Activated CD4-positive, alpha-beta T cell treated with anti-CD3 and anti-CD28 coated beads for 36 hours (primary cell): ENCODE measurements at regions of chr22 and their contacts with region 1.

Region 1: GRCh38 chr22:49852898-49853894 is at the start of gene ZBED4:
- DNase-seq: peak; percentile 99
- ATAC-seq: peak; percentile 88
- H3K4me3 Mint-ChIP-seq: peak within 1 kb of the TSS; percentile 96
- H3K27ac Mint-ChIP-seq: peak within 1 kb of the TSS; percentile 87
- H3K4me1 Mint-ChIP-seq: peaks cover 36% of the 10 kb centered on the region
- H3K27me3 Mint-ChIP-seq: peaks cover 8% of the 10 kb centered on the region
- total RNA-seq, gene ZBED4: 17.3 to 17.4 TPM

Region 2: DNA sequence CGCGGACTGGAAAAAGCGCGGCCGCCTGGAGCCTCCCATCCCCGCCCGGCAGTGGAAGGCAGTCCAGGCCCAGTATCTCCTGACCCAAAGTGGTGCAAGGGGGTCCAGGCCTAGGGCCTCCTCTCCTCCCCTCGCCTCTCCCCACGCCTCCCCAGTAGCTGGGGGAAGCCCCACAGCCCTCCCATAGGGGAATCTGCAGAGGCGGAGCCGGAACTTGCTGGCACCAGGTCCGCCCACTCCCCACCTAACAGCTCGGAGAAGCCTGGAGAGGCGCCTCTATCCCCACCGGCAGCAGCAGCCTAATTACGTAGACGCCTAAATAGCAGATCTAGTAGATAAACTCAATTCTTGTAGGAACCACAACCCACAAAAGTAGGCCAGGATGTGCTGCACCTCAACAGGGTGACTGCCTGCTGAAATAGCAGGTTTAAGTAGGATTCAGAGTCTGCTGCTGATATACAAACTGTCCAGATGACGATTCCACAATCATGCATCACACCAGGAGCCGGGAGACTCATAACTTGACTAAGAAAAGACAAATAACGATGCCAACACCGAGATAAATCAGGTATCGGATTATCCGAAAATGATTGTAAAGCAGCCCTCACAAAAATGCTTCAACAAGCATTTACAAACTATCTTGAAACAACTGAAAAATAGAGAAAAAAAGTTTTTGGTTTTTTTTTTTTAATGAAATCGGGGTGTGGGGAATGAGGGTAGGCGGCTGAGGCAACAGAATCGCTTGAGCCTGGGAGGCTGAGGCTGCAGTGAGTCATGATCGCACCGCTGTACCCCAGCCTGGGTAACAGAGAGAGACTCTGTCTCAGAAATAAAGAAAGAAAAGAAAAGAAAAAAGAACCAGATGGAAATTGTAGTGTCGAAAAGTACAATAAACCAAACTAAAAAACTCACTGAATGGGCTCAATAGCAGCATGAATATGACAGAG is 14.2 kb before region 1 on chr22:
- CTCF ChIA-PET with region 1: interaction called, 4 read pairs
- POLR2A ChIA-PET with region 1: interaction called, 3 read pairs
- intact Hi-C with region 1: loop called (anchors 1 kb)
- DNase-seq: peak; percentile 92
- ATAC-seq: peak; percentile 87
- H3K4me3 Mint-ChIP-seq: peak overlapping the region; percentile 73
- H3K27ac Mint-ChIP-seq: peak overlapping the region; percentile 98
- H3K4me1 Mint-ChIP-seq: peaks cover 35% of the 10 kb centered on the region
- H3K27me3 Mint-ChIP-seq: no peaks in the 10 kb centered on the region

Region 3: GRCh38 chr22:49906071-49906932 is 53.1 kb after region 1 on chr22:
- CTCF ChIA-PET with region 1: no interaction called
- POLR2A ChIA-PET with region 1: no interaction called
- intact Hi-C with region 1: no loop called
- DNase-seq: no peak
- ATAC-seq: no peak
- H3K4me3 Mint-ChIP-seq: no peak overlapping the region
- H3K27ac Mint-ChIP-seq: no peak overlapping the region
- H3K4me1 Mint-ChIP-seq: no peaks in the 10 kb centered on the region
- H3K27me3 Mint-ChIP-seq: no peaks in the 10 kb centered on the region

Region 4: GRCh38 chr22:49936018-49936952 is 83.1 kb after region 1 on chr22:
- CTCF ChIA-PET with region 1: no interaction called
- POLR2A ChIA-PET with region 1: no interaction called
- intact Hi-C with region 1: loop called in 1 of 2 experiments (anchors 1 kb)
- DNase-seq: peak; percentile 99
- ATAC-seq: peak; percentile 84
- H3K4me3 Mint-ChIP-seq: peak overlapping the region; percentile 64
- H3K27ac Mint-ChIP-seq: peak overlapping the region; percentile 85
- H3K4me1 Mint-ChIP-seq: peaks cover 43% of the 10 kb centered on the region
- H3K27me3 Mint-ChIP-seq: no peaks in the 10 kb centered on the region

Region 5: DNA sequence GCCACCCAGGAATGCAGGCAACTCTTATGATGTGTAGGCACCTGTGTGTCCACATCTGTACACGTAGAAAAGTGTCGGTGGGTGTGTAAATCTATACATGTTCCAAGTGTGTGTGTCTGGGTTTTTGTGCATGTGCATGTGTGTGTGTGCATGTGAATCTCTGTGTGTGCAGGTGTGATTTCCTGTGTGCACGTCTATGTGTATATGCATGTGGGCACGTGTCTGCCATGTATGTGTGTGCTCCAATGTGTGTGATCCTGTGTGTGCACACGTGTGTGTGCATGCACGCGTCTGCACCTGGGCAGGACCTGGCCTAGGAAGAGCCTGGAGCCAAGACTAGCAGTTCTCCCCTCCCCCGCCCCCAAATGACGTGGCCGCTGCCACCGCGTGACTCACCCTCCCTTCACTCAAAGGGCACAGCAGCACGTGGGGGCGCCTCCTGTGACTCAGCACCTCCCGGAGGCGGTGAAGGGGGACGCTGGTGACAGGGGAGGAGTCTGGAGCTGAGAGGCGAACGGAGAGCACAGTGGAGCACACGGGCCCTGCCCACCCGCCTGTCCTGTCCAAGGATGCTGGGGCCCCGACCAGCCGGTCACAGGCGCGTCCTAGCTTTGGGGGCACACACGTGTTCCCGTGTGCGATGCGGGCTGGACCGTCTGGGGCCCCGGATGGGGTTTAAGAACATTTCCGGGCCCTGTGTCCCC is 117.5 kb after region 1 on chr22:
- CTCF ChIA-PET with region 1: no interaction called
- POLR2A ChIA-PET with region 1: interaction called, 4 read pairs
- intact Hi-C with region 1: loop called in 1 of 2 experiments (anchors 2 kb)
- DNase-seq: peak; percentile 99
- ATAC-seq: peak; percentile 87
- H3K4me3 Mint-ChIP-seq: no peak overlapping the region
- H3K27ac Mint-ChIP-seq: peak overlapping the region; percentile 93
- H3K4me1 Mint-ChIP-seq: peaks cover 38% of the 10 kb centered on the region
- H3K27me3 Mint-ChIP-seq: no peaks in the 10 kb centered on the region